ENCODE measurements at regions of chr1 and their contacts with region 1.

Region 1: GRCh38 chr1:16119926-16120325 is 35.9 kb downstream of the EPHA2 start:
- DNase-seq: no peak
- ATAC-seq: no peak
- H3K4me3 ChIP-seq: no peak overlapping the region
- H3K27ac ChIP-seq: no peak overlapping the region
- H3K4me1 ChIP-seq: peaks cover 13% of the 10 kb centered on the region
- H3K27me3 ChIP-seq: no peaks in the 10 kb centered on the region
- CTCF ChIP-seq: no peak
- POLR2A ChIP-seq: no peak
- RAD21 ChIP-seq: no peak

Region 2: DNA sequence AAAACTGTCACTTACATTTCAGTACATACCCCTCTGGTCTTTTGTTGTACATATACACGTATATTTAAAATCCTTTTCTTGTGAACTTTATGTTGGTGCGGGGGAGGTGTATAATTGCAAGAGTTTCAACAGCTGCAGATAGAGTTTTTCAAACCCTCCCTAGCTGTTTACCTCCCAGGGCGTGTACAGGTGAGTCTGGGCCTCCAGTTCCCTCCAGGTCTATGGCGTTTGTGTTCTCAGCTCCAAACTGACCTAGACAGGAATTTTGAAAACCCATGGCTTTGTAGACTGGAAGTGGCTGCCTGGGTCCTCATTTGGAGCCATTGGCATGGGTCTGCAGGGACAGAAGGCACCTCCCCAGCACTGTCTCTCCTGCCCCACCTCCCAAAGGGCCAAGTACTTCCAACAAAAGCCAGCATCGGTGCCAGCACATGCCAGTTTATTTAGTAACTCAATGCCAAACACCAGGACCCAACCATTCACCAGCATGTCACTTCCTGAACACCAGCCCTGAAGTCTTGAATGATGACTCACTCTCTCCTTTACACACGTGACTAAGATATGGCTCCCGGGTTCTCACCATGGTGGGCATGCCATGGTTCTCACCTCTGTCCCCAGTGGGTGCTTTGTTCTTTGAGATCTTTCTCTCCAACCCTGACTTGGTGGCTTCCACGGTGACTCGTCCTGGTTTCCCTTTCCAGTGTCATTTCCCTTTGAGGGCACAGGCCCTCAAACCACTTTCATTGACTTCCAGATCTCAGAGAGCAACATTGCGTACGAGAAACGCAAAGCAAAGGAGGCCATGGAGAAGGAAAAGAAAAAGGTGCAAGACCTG is 767.6 kb before region 1 on chr1:
- CTCF ChIA-PET with region 1: no interaction called
- POLR2A ChIA-PET with region 1: no interaction called
- dilution Hi-C with region 1: no loop called
- in situ Hi-C with region 1: no loop called
- intact Hi-C with region 1: no loop called
- DNase-seq: peak; percentile 84
- ATAC-seq: peak; percentile 57
- H3K4me3 ChIP-seq: no peak overlapping the region
- H3K27ac ChIP-seq: peak overlapping the region; percentile 19; the same call in 1 of the 2 replicates
- H3K4me1 ChIP-seq: peaks cover 11% of the 10 kb centered on the region
- H3K27me3 ChIP-seq: no peaks in the 10 kb centered on the region
- CTCF ChIP-seq: no peak
- POLR2A ChIP-seq: no peak
- RAD21 ChIP-seq: no peak

Region 3: DNA sequence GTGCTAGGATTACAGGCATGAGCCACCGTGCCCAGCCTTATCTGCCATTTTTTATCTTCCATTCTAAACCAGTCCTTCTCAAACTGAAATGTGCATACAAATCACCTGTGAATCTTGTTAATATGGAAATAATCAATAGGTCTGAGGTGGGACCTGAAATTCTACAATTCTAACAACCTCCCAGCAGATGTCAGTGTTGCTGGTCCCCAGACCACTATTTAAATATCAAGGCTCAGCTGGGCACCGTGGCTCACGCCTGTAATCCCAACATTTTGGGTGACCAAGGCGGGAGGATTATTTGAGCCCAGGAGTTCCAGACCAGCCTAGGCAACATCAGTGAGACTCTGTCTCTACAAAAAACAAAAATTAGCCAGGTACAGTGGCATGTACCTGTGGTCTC is 316.6 kb before region 1 on chr1:
- CTCF ChIA-PET with region 1: no interaction called
- POLR2A ChIA-PET with region 1: no interaction called
- dilution Hi-C with region 1: no loop called
- in situ Hi-C with region 1: no loop called
- intact Hi-C with region 1: no loop called
- DNase-seq: peak; percentile 38
- ATAC-seq: no peak
- H3K4me3 ChIP-seq: no peak overlapping the region
- H3K27ac ChIP-seq: no peak overlapping the region
- H3K4me1 ChIP-seq: peaks cover 25% of the 10 kb centered on the region
- H3K27me3 ChIP-seq: no peaks in the 10 kb centered on the region
- CTCF ChIP-seq: peak; percentile 35
- POLR2A ChIP-seq: no peak
- RAD21 ChIP-seq: peak; percentile 52

Region 4: DNA sequence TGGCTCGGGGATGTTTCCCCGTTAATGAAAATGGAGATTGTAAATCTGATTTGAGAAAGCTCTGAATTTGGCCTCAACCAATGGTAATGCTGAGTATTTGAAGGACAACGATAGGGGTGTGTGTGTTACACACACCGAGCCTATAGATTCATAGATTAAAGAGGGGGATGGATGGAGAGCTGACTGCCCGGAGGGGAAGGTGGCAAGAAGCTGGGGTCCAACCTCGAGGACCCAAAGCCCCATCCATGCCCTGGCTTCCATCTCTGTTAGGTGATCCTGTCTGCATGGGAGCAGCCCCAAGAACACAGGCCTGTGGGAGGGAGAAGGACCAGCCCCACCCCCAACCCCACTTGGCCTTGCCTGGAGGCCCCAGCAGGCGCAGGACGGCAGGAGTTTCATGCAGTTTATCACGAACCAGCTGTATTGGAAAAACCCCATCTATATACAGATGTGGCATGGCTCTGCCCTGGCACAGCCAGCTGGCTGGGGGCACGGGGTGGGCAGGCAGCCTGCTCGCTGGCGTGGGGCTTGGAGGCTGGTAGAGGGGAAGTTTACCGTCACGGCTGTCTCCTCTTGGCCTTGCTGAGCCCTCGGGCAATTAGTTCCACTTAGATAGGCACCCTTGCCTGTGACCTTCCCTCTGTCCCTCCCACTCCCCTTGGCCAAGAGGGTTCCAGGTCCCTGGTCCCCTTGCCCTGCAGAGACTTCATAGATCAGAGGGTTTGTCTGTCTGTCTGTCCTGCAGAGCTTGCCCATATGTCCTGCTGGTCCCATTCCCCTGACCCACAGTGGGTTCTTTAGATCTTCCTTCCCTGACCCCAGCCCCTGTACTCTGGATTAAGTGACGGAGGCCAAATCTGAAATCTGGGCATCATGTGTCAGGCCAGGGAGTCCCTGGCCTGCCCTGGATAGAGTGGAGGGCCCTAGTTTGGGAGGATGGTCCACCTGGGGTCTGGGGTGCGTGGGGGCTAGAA is 105.1 kb before region 1 on chr1:
- CTCF ChIA-PET with region 1: no interaction called
- POLR2A ChIA-PET with region 1: interaction called, 10 read pairs
- dilution Hi-C with region 1: no loop called
- in situ Hi-C with region 1: no loop called
- intact Hi-C with region 1: no loop called
- DNase-seq: no peak
- ATAC-seq: no peak
- H3K4me3 ChIP-seq: no peak overlapping the region
- H3K27ac ChIP-seq: no peak overlapping the region
- H3K4me1 ChIP-seq: peaks cover 30% of the 10 kb centered on the region
- H3K27me3 ChIP-seq: no peaks in the 10 kb centered on the region
- CTCF ChIP-seq: no peak
- POLR2A ChIP-seq: no peak
- RAD21 ChIP-seq: no peak

Region 5: DNA sequence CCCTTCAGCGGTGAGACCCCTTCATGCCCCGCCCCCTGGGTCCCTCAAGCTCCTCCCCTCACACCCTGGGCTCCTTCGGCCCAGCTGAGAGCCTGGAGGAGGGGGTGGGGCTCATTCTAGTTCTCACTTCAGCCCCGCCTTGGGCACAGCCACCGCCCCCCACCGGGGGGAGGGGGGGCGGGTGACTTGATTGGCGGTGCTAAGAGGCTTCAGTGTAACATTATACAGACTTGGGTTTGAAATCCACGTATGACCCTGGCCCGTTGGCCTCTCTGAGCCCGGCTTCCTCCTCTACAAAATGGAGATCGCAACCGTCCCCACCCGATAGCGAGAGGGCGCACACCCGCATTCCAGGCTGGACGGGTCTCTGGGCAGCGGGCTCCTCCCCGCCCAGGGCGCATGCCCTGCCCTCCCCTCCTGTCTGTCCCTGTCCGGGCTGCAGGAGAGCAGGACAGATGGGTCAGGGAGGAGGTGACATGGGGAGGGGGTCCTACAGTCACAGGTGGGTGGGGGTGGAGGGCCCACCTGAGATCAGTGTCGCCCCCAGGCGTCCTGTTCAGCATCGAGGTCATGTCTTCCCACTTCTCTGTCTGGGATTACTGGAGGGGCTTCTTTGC is 71.2 kb before region 1 on chr1:
- CTCF ChIA-PET with region 1: no interaction called
- POLR2A ChIA-PET with region 1: no interaction called
- dilution Hi-C with region 1: no loop called
- in situ Hi-C with region 1: no loop called
- intact Hi-C with region 1: no loop called
- DNase-seq: no peak
- ATAC-seq: peak; percentile 79
- H3K4me3 ChIP-seq: peak overlapping the region; percentile 59
- H3K27ac ChIP-seq: no peak overlapping the region
- H3K4me1 ChIP-seq: no peaks in the 10 kb centered on the region
- H3K27me3 ChIP-seq: peaks cover 32% of the 10 kb centered on the region; the same call in 1 of the 2 replicates
- CTCF ChIP-seq: no peak
- POLR2A ChIP-seq: no peak
- RAD21 ChIP-seq: no peak